ENCODE measurements at regions of chr12 and their contacts with region 1.

Region 1: DNA sequence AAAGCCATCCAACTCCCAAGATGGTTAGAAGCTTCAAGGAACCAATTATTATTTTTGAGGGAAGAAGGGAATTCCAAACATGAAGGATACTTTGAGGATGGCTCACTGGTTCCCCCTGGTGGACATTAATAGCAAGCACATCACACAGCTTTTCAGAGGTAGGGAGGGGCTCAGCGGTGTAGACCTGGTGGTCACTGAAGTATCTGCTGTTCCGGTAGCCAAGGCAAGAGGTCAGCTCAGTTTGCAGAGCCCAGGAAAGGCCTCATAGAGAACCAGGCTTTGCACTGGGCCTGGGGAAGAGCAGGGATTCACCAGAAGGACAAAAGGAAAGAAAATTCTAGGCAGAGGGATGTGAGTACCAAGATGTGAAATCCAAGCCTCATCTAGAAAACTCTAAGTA is 118.7 kb downstream of the KSR2 start:
- H3K4me3 ChIP-seq: no peak overlapping the region
- H3K27ac ChIP-seq: no peak overlapping the region
- H3K4me1 ChIP-seq: no peaks in the 10 kb centered on the region
- CTCF ChIP-seq: peak; percentile 45; the same call in 1 of the 2 replicates

Region 2: GRCh38 chr12:117236456-117237001 is 613.5 kb before region 1 on chr12:
- CTCF ChIA-PET with region 1: interaction called, 32 read pairs
- POLR2A ChIA-PET with region 1: interaction called, 3 read pairs
- H3K4me3 ChIP-seq: no peak overlapping the region
- H3K27ac ChIP-seq: no peak overlapping the region
- H3K4me1 ChIP-seq: no peaks in the 10 kb centered on the region
- CTCF ChIP-seq: peak; percentile 31; the same call in 1 of the 2 replicates

Region 3: GRCh38 chr12:117587631-117588287 is 262.3 kb before region 1 on chr12:
- CTCF ChIA-PET with region 1: interaction called, 24 read pairs
- POLR2A ChIA-PET with region 1: no interaction called
- H3K4me3 ChIP-seq: no peak overlapping the region
- H3K27ac ChIP-seq: no peak overlapping the region
- H3K4me1 ChIP-seq: no peaks in the 10 kb centered on the region
- CTCF ChIP-seq: peak; percentile 77

Region 4: GRCh38 chr12:117774941-117775775 is 74.9 kb before region 1 on chr12:
- CTCF ChIA-PET with region 1: interaction called, 10 read pairs
- POLR2A ChIA-PET with region 1: no interaction called
- H3K4me3 ChIP-seq: no peak overlapping the region
- H3K27ac ChIP-seq: no peak overlapping the region
- H3K4me1 ChIP-seq: peaks cover 4% of the 10 kb centered on the region; the same call in 1 of the 2 replicates
- CTCF ChIP-seq: no peak

Region 5: GRCh38 chr12:117809509-117809908 is 40.5 kb before region 1 on chr12:
- CTCF ChIA-PET with region 1: interaction called, 12 read pairs
- POLR2A ChIA-PET with region 1: no interaction called
- H3K4me3 ChIP-seq: no peak overlapping the region
- H3K27ac ChIP-seq: no peak overlapping the region
- H3K4me1 ChIP-seq: no peaks in the 10 kb centered on the region
- CTCF ChIP-seq: no peak

Region 6: GRCh38 chr12:117836999-117837736 is 12.9 kb before region 1 on chr12:
- CTCF ChIA-PET with region 1: interaction called, 59 read pairs
- POLR2A ChIA-PET with region 1: no interaction called
- H3K4me3 ChIP-seq: no peak overlapping the region
- H3K27ac ChIP-seq: no peak overlapping the region
- H3K4me1 ChIP-seq: no peaks in the 10 kb centered on the region
- CTCF ChIP-seq: peak; percentile 86

Measured in HEK293 (cell line).